GM12878 (cell line): ENCODE measurements at regions of chr16 and their contacts with region 1.

Region 1: GRCh38 chr16:10883004-10883403 is 6.0 kb downstream of the CIITA start:
- DNase-seq: no peak
- ATAC-seq: no peak
- H3K4me3 ChIP-seq: peak overlapping the region; percentile 14; the same call in 1 of the 2 replicates
- H3K27ac ChIP-seq: peak overlapping the region; percentile 8; the same call in 1 of the 2 replicates
- H3K4me1 ChIP-seq: peaks cover 64% of the 10 kb centered on the region
- H3K27me3 ChIP-seq: no peaks in the 10 kb centered on the region
- CTCF ChIP-seq: no peak
- EP300 ChIP-seq: no peak
- POLR2A ChIP-seq: no peak
- RAD21 ChIP-seq: no peak

Region 2: GRCh38 chr16:10338426-10338825 is 544.6 kb before region 1 on chr16:
- CTCF ChIA-PET with region 1: no interaction called
- POLR2A ChIA-PET with region 1: no interaction called
- RAD21 ChIA-PET with region 1: no interaction called
- SMC1A ChIA-PET with region 1: no interaction called
- in situ Hi-C with region 1: no loop called
- intact Hi-C with region 1: no loop called
- DNase-seq: no peak
- ATAC-seq: no peak
- H3K4me3 ChIP-seq: no peak overlapping the region
- H3K27ac ChIP-seq: no peak overlapping the region
- H3K4me1 ChIP-seq: no peaks in the 10 kb centered on the region
- H3K27me3 ChIP-seq: no peaks in the 10 kb centered on the region
- CTCF ChIP-seq: no peak
- EP300 ChIP-seq: no peak
- POLR2A ChIP-seq: no peak
- RAD21 ChIP-seq: no peak

Region 3: DNA sequence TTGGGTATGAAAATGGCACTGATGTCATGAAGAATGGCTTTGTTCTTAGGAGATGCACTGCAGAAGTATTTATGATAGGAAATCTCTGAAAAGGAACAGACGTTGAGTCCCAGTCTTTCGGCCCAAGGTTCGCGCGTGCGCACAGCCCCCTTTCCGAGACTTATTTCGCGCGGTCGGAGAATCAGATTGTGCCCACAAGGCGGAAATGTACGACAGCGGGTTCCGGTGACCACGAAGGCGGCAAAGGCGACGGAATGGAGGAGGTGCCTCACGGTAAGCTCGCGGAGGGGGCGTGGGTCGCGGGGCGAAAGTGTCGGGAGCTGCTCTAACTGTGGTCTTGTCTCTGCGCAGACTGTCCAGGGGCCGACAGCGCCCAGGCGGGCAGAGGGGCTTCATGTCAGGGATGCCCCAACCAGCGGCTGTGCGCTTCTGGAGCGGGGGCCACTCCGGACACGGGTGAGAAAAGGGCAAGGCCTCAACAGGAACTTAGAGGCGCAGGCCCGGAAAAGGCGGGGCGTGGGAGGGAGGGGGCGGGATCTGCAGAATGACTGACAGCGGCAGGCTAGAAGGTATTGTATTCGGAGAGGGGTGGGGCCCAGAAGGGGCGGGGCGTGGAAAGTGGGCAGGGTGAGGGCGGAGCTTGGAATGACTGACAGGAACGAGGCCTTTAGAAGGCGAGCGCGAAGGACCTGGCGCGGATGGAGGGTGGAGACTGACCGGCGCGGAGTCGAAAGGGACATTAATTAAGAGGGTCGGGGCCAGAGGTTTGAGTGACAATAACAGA is 139.2 kb before region 1 on chr16 and contains the start of gene NUBP1:
- CTCF ChIA-PET with region 1: interaction called, 8 read pairs
- POLR2A ChIA-PET with region 1: interaction called, 25 read pairs
- RAD21 ChIA-PET with region 1: interaction called, 65 read pairs
- SMC1A ChIA-PET with region 1: interaction called, 66 read pairs
- in situ Hi-C with region 1: loop called (anchors 5 kb)
- intact Hi-C with region 1: no loop called
- DNase-seq: peak; percentile 94
- ATAC-seq: peak; percentile 93
- H3K4me3 ChIP-seq: peak within 1 kb of the TSS; percentile 69
- H3K27ac ChIP-seq: peak within 1 kb of the TSS; percentile 74
- H3K4me1 ChIP-seq: peaks cover 39% of the 10 kb centered on the region
- H3K27me3 ChIP-seq: no peaks in the 10 kb centered on the region
- CTCF ChIP-seq: peak in 1 of 3 experiments; percentile 8; a peak in 1 of 6 replicates
- EP300 ChIP-seq: 0 out of 4 replicates have a peak, but pooled peaks of 1 of the 2 experiments have one; percentile 4
- POLR2A ChIP-seq: peak; percentile 96
- RAD21 ChIP-seq: no peak
- polyA plus RNA-seq, gene NUBP1: 31.0 to 36.3 TPM

Region 4: DNA sequence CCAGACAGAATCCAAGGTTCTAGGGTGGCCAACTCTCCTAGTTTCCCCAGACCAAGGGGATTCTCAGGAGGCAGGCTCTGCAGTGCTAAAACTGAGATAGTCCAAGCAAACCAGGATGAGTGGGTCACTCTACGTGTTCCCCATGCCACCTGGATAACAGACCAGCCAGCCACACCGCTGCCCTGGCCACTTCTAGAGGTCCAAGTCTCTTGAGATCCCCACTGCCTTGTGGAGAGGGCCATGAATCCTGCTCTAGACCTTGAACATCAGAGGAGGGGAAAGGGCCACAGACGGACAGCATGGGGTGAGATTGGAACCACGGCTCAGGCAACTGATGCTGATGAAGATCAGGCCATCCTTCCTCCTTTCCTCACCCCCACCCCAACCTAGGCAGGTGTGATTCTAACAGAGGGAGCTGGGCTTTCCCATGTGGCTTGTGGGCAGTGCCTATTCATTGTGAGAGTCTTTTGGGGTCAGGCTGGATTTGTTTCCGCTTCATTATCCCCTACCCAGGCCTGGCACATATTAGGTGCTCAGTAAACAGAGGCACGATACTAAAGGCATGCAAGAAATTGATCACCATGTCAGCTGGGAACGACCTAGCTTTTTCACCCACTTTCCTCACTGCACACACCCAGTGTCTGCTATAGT is 47.6 kb before region 1 on chr16:
- CTCF ChIA-PET with region 1: interaction called, 8 read pairs
- POLR2A ChIA-PET with region 1: interaction called, 25 read pairs
- RAD21 ChIA-PET with region 1: interaction called, 17 read pairs
- SMC1A ChIA-PET with region 1: interaction called, 62 read pairs
- in situ Hi-C with region 1: no loop called
- intact Hi-C with region 1: no loop called
- DNase-seq: peak; percentile 84
- ATAC-seq: peak; percentile 76
- H3K4me3 ChIP-seq: no peak overlapping the region
- H3K27ac ChIP-seq: peak overlapping the region; percentile 33
- H3K4me1 ChIP-seq: peaks cover 49% of the 10 kb centered on the region
- H3K27me3 ChIP-seq: no peaks in the 10 kb centered on the region
- CTCF ChIP-seq: no peak
- EP300 ChIP-seq: peak; percentile 86 to 89
- POLR2A ChIP-seq: no peak
- RAD21 ChIP-seq: no peak; the same call in 1 of the 2 replicates

Region 5: GRCh38 chr16:10895053-10895946 is 12.3 kb after region 1 on chr16:
- CTCF ChIA-PET with region 1: interaction called, 73 read pairs
- POLR2A ChIA-PET with region 1: interaction called, 133 read pairs
- RAD21 ChIA-PET with region 1: interaction called, 142 read pairs
- SMC1A ChIA-PET with region 1: interaction called, 133 read pairs
- in situ Hi-C with region 1: no loop called
- intact Hi-C with region 1: loop called (anchors 2 kb)
- DNase-seq: no peak
- ATAC-seq: no peak
- H3K4me3 ChIP-seq: no peak overlapping the region
- H3K27ac ChIP-seq: no peak overlapping the region
- H3K4me1 ChIP-seq: peaks cover 68% of the 10 kb centered on the region
- H3K27me3 ChIP-seq: no peaks in the 10 kb centered on the region
- CTCF ChIP-seq: no peak
- EP300 ChIP-seq: no peak
- POLR2A ChIP-seq: no peak
- RAD21 ChIP-seq: no peak

Region 6: GRCh38 chr16:10906914-10907756 is 24.1 kb after region 1 on chr16:
- CTCF ChIA-PET with region 1: interaction called, 17 read pairs
- POLR2A ChIA-PET with region 1: interaction called, 7 read pairs
- RAD21 ChIA-PET with region 1: interaction called, 30 read pairs
- SMC1A ChIA-PET with region 1: interaction called, 55 read pairs
- in situ Hi-C with region 1: no loop called
- intact Hi-C with region 1: no loop called
- DNase-seq: no peak
- ATAC-seq: no peak
- H3K4me3 ChIP-seq: no peak overlapping the region
- H3K27ac ChIP-seq: no peak overlapping the region
- H3K4me1 ChIP-seq: peaks cover 7% of the 10 kb centered on the region
- H3K27me3 ChIP-seq: no peaks in the 10 kb centered on the region
- CTCF ChIP-seq: no peak
- EP300 ChIP-seq: no peak
- POLR2A ChIP-seq: no peak
- RAD21 ChIP-seq: no peak

Region 7: DNA sequence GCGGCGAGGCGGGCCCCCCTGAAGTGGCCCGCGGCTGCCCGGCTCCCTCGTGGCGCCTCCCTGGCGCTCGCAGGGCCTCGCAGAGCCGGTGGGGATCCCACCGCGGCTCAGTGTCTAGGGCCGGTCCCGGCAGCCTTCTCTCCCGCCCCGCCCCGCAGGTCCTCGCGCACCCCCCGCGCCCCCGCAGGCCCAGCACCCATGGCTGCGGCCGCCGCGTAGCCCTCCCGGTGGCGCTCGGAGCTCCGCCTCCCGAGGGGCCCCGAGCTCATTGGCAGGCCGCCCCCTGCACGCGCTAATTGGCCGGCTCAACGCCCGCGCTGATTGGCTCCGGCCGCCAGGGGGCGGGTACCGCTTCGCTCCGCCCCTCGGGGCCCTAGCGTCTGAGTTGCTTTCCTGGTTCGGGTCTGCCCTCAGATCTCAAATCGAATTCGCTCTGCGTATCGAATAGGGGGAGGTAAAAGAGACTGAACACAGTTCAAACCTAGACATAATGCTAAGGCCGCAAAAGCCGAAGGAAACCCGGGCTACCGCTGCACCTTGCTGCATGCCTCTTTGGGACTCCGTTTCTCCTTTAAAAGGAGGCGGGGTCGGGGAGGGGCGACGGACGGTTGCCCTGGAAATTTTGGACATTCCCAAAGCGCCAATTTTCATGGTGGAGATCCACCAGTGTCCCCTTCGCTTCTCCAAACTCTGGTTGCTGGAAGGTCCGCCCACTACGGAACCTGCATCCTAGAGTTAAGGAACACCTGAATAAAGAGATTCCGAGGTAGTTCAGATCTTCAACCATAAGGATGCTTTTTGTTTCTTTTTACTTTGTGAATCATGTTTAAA is 59.4 kb after region 1 on chr16 and contains the start of gene DEXI:
- CTCF ChIA-PET with region 1: interaction called, 14 read pairs
- POLR2A ChIA-PET with region 1: interaction called, 15 read pairs
- RAD21 ChIA-PET with region 1: interaction called, 14 read pairs
- SMC1A ChIA-PET with region 1: interaction called, 11 read pairs
- in situ Hi-C with region 1: no loop called
- intact Hi-C with region 1: no loop called
- DNase-seq: peak; percentile 69
- ATAC-seq: peak; percentile 80
- H3K4me3 ChIP-seq: peak within 1 kb of the TSS; percentile 82
- H3K27ac ChIP-seq: peak within 1 kb of the TSS; percentile 72
- H3K4me1 ChIP-seq: peaks cover 32% of the 10 kb centered on the region
- H3K27me3 ChIP-seq: no peaks in the 10 kb centered on the region
- CTCF ChIP-seq: peak in 1 of 3 experiments; percentile 9; a peak in 1 of 6 replicates
- EP300 ChIP-seq: no peak
- POLR2A ChIP-seq: peak; percentile 79
- RAD21 ChIP-seq: no peak
- polyA plus RNA-seq, gene DEXI: 1.4 to 4.3 TPM

Region 8: DNA sequence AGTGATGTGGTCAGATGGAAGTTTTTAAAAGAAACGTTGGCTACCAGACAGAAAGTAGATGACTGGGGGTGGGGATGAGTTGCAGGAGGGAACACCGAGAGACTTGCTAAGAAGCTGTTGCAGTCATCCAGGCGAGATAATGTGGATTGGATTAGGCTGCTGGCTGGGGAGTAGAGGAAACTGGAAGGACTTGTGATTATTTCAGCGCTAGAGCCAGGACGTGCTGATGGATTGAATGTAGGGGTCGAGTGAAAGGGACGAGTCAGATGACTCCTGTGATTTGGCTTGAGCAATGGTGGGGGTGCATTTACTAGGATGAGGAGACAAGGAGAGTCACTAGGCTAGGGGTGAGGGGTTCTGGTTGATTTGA is 149.9 kb after region 1 on chr16:
- CTCF ChIA-PET with region 1: no interaction called
- POLR2A ChIA-PET with region 1: no interaction called
- RAD21 ChIA-PET with region 1: no interaction called
- SMC1A ChIA-PET with region 1: no interaction called
- in situ Hi-C with region 1: no loop called
- intact Hi-C with region 1: no loop called
- DNase-seq: no peak
- ATAC-seq: no peak
- H3K4me3 ChIP-seq: no peak overlapping the region
- H3K27ac ChIP-seq: no peak overlapping the region
- H3K4me1 ChIP-seq: no peaks in the 10 kb centered on the region
- H3K27me3 ChIP-seq: no peaks in the 10 kb centered on the region
- CTCF ChIP-seq: no peak
- EP300 ChIP-seq: no peak
- POLR2A ChIP-seq: no peak
- RAD21 ChIP-seq: no peak